ENCODE measurements at regions of chr7 and their contacts with region 1.

Region 1: GRCh38 chr7:55557666-55558188 is 14.6 kb downstream of the VOPP1 start:
- DNase-seq: no peak
- H3K4me3 Mint-ChIP-seq: peak overlapping the region; percentile 48
- H3K27ac Mint-ChIP-seq: peak overlapping the region; percentile 87
- H3K4me1 Mint-ChIP-seq: peaks cover 100% of the 10 kb centered on the region
- H3K27me3 Mint-ChIP-seq: no peaks in the 10 kb centered on the region

Region 2: GRCh38 chr7:55177589-55178261 is 380.0 kb before region 1 on chr7:
- intact Hi-C with region 1: no loop called
- DNase-seq: no peak
- H3K4me3 Mint-ChIP-seq: no peak overlapping the region
- H3K27ac Mint-ChIP-seq: no peak overlapping the region
- H3K4me1 Mint-ChIP-seq: no peaks in the 10 kb centered on the region
- H3K27me3 Mint-ChIP-seq: peaks cover 6% of the 10 kb centered on the region

Region 3: GRCh38 chr7:55546829-55547228 is 10.9 kb before region 1 on chr7:
- intact Hi-C with region 1: loop called (anchors 1 kb)
- DNase-seq: no peak
- H3K4me3 Mint-ChIP-seq: no peak overlapping the region
- H3K27ac Mint-ChIP-seq: peak overlapping the region; percentile 34
- H3K4me1 Mint-ChIP-seq: peaks cover 88% of the 10 kb centered on the region
- H3K27me3 Mint-ChIP-seq: no peaks in the 10 kb centered on the region

Measured in activated T-helper 1 cell treated with anti-CD3 and anti-CD28 coated beads, Interleukin-12 subunit alpha, Interleukin-12 subunit beta, Interleukin-2, Interleukin-4 antibody, amounts not matched to agents 30 ng/mL and 10 ng/mL and 1 ng/mL, durations not matched to agents 14 hours and 24 hours and 36 hours (primary cell).